Gastrocnemius medialis (tissue), 4 donors: ENCODE measurements at regions of chr20 and their contacts with region 1.

Region 1: DNA sequence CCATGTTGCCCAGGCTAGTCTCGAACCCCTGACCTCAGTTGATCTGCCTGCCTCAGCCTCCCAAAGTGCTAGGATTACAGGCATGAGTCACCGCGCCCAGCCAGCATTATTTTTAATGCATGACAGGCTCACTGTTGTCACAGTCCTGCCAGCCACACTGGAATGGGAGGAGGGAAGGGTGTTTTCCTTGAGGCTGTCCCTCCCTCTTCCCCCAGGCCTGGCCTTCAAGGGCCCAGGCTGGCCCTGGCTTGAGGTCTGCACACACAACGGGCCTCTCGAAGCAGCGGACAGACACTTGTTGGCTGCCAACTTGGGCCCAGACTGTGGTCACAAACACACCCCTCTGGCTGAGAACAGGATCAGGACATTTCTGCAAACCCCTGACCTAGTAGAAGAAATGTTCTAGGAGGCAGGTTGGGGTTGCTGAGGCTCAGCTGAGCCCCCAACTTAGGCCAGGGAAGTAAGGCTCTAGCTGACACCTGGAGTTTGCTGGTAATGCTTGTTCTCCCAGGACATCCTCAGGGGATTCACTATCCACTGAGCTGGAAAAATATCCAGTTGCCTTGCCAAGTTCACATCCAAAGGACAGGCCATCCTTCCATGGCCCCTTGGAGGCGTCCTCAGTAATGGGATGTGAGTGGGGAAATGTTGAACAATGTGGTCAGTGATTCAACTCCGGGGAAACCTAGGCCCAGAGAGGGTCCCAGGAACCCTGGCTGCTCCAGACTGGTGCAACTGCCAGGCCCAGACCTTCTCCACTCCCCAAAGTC is 9.9 kb downstream of the SNTA1 start:
- DNase-seq: peak; percentile 90 to 96
- ATAC-seq: peak; percentile 91 to 93
- H3K4me3 ChIP-seq: no peak overlapping the region
- H3K27ac ChIP-seq: peak overlapping the region; percentile 97 to 98 (median 98)
- H3K4me1 ChIP-seq: peaks cover 31 to 45% of the 10 kb centered on the region in 2 donors
- H3K27me3 ChIP-seq: no peaks in the 10 kb centered on the region
- CTCF ChIP-seq: no peak
- POLR2A ChIP-seq: peak; percentile 53 to 77

Region 2: DNA sequence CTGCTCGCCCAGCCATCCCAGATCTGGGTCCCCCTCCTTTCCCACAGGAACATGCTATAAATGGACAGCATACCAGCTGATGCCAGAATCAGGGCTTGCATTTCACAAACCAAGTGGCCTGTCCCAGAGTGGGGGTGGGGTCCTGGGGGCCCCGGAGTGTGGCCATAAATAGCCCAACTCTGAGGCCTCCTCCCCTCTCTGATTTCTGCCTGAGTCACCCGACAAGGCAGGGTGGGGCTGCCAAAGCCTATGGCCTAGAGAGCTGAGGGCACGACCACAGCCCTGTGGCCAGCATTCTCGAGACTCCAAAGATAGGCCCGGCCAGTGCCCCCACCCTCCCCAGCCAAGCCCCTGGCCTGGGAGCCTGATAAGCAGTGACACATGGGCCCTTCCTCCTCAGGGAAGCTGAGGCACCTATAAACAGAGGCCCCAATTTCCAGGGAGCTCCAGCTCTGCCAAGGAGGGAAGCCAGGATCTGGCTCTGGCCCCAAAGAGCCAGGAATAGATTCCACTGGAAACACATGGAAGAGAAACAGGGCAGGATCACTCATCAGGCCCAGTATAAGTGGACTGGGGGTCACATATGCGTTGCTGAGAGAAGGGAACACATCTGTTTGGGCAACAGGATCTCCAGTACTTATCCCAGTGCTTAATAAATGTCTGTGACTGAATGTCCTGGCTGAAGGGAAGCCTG is 10.4 kb before region 1 on chr20:
- in situ Hi-C with region 1: no loop called
- intact Hi-C with region 1: loop called (anchors 1 kb)
- DNase-seq: peak; percentile 94 to 99
- ATAC-seq: peak; percentile 68 to 73
- H3K4me3 ChIP-seq: peak overlapping the region in 2 of 4 donors; percentile 12 to 23
- H3K27ac ChIP-seq: peak overlapping the region; percentile 97 to 98 (median 98)
- H3K4me1 ChIP-seq: peaks cover 55 to 69% of the 10 kb centered on the region in 2 donors
- H3K27me3 ChIP-seq: no peaks in the 10 kb centered on the region
- CTCF ChIP-seq: no peak
- POLR2A ChIP-seq: peak; percentile 33 to 52